ENCODE measurements at regions of chr3 and their contacts with region 1.

Region 1: GRCh38 chr3:196432137-196432879 is at the start of gene UBXN7:
- DNase-seq: peak; percentile 98
- ATAC-seq: peak; percentile 89
- H3K4me3 Mint-ChIP-seq: peak within 1 kb of the TSS; percentile 79
- H3K27ac Mint-ChIP-seq: peak within 1 kb of the TSS; percentile 95
- H3K4me1 Mint-ChIP-seq: peaks cover 20% of the 10 kb centered on the region
- H3K27me3 Mint-ChIP-seq: no peaks in the 10 kb centered on the region
- total RNA-seq, gene UBXN7: 67.2 to 102 TPM

Region 2: DNA sequence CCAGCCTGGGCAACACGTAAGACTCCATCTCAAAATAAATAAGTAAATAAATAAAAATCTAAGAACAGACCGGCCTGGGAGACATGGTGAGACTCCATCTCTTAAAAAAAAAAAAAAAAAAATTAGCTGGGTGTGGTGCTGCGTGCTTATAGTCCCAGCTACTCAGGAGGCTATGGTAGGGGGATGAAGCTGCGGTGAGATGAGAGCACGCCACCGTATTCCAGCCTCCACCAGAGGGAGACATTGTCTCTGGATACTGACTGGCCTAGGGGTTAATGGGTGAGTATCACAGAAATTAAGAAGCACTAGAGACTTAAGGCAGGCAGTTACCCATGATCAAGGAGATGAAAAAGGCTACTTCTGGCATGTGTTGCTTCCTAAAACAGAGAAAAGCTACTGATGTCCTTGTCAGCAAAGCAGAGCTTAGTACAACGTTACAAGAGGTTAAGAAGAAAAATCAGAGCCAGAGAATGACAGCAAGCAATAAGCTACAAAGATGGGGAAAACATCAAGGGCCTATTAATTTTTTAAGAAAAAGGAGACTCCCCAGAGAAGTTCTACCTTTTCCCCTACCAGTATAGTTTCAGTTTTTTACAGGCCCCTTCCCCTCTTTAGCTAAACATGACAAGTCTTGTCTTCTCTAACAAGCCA is 359.0 kb before region 1 on chr3:
- CTCF ChIA-PET with region 1: no interaction called
- POLR2A ChIA-PET with region 1: no interaction called
- intact Hi-C with region 1: loop called in 1 of 2 experiments (anchors 10 kb)
- DNase-seq: peak; percentile 78
- ATAC-seq: peak; percentile 96
- H3K4me3 Mint-ChIP-seq: no peak overlapping the region
- H3K27ac Mint-ChIP-seq: peak overlapping the region; percentile 72
- H3K4me1 Mint-ChIP-seq: peaks cover 29% of the 10 kb centered on the region
- H3K27me3 Mint-ChIP-seq: no peaks in the 10 kb centered on the region

Region 3: GRCh38 chr3:196219194-196219978 is 212.9 kb before region 1 on chr3:
- CTCF ChIA-PET with region 1: no interaction called
- POLR2A ChIA-PET with region 1: no interaction called
- intact Hi-C with region 1: loop called in 1 of 2 experiments (anchors 2 kb)
- DNase-seq: peak; percentile 81
- ATAC-seq: peak; percentile 95
- H3K4me3 Mint-ChIP-seq: peak overlapping the region; percentile 69
- H3K27ac Mint-ChIP-seq: peak overlapping the region; percentile 80
- H3K4me1 Mint-ChIP-seq: peaks cover 12% of the 10 kb centered on the region
- H3K27me3 Mint-ChIP-seq: peaks cover 3% of the 10 kb centered on the region

Region 4: DNA sequence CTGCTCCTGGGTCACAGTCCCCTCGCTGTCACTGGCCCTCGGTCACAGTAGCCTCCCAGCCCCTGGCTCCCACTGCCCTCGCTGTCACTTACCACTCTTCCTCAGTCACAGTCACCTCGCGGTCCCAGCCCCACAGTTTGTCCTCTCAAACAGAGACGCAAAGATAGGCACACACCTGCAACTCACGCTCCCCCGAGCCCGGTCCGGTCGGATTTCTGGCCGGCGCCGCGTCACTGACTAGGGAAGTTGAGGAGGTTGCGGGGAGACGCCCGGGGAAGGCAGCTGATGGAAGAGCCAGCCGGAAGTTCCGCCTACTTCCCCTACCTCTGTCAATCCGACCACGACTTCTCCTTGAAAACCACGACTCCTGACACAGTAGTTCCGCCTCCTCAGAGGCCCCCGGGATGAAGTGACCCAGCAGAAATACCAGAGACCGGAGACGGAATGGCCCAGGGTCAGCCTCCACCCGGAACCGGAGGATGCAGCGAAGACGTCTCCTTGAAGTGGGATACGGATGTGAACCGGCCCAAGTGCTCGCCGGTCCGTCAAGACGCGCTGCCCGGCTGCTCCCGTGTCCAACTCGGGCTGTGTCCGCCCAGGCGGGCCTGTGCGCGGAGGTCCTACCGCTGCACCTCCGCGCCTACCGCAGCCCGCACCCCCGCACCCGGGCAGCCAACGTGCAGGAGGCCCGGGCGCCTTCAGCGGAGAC is 144.7 kb before region 1 on chr3 and contains the start of gene PCYT1A:
- CTCF ChIA-PET with region 1: interaction called, 3 read pairs
- POLR2A ChIA-PET with region 1: interaction called, 3 read pairs
- intact Hi-C with region 1: loop called in 1 of 2 experiments (anchors 1 kb)
- DNase-seq: peak; percentile 86
- ATAC-seq: peak; percentile 90
- H3K4me3 Mint-ChIP-seq: peak within 1 kb of the TSS; percentile 98
- H3K27ac Mint-ChIP-seq: peak within 1 kb of the TSS; percentile 97
- H3K4me1 Mint-ChIP-seq: peaks cover 34% of the 10 kb centered on the region
- H3K27me3 Mint-ChIP-seq: no peaks in the 10 kb centered on the region
- total RNA-seq, gene PCYT1A: 41.8 to 47.1 TPM

Region 5: DNA sequence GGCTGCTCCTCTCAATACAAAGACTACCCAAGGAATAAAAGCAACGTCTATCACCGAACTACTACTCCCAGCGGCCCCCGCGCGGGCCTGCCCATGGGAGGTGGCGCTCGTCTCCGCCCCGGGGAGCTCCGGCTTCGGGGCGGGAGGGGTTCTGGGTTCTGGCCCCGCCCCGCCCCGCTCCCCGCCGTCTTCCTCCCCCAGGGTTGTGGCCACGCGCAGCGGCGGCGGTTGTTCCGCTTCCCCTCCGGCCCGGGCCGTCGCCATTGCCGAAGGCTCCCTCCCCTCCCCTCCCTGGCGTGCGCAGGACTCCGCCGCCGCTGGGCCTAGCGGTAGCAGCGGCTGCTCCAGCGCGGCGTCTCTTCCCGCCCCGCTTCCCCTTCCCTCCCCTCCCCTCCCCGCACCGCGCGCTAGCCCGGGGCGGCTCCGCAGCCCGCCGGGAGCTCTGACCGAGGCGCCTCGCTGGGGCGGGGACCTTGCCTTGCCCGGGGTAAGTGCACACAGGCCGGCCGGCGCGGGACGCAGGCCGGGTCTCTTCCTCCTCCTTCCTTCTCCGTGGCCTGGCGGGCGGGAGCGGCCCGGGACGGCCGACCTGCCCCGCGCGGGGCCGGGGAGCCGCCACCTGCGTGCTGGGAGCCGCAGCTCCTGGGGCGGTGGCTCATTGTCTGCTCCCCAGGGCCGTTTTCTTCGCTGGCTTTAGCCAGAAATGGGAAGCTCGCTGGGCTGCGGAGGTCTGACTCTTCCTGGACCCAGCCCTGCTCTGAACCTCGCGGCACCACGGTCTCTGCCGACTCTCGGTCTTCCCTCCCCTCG is 307.6 kb after region 1 on chr3 and contains the start of gene PAK2:
- CTCF ChIA-PET with region 1: no interaction called
- POLR2A ChIA-PET with region 1: interaction called, 3 read pairs
- intact Hi-C with region 1: loop called in 1 of 2 experiments (anchors 2 kb)
- DNase-seq: peak; percentile 94
- ATAC-seq: peak; percentile 92
- H3K4me3 Mint-ChIP-seq: peak within 1 kb of the TSS; percentile 93
- H3K27ac Mint-ChIP-seq: peak within 1 kb of the TSS; percentile 99
- H3K4me1 Mint-ChIP-seq: peaks cover 25% of the 10 kb centered on the region
- H3K27me3 Mint-ChIP-seq: no peaks in the 10 kb centered on the region
- total RNA-seq, gene PAK2: 57.6 to 82.2 TPM